GM23248 (cell line): ENCODE measurements at regions of chr2 and their contacts with region 1.

Region 1: GRCh38 chr2:168346725-168347477 is 99.5 kb upstream of the STK39 start:
- DNase-seq: peak; percentile 85
- H3K4me3 ChIP-seq: peak overlapping the region; percentile 75
- H3K27ac ChIP-seq: no peak overlapping the region
- H3K4me1 ChIP-seq: peaks cover 13% of the 10 kb centered on the region
- H3K27me3 ChIP-seq: no peaks in the 10 kb centered on the region

Region 2: DNA sequence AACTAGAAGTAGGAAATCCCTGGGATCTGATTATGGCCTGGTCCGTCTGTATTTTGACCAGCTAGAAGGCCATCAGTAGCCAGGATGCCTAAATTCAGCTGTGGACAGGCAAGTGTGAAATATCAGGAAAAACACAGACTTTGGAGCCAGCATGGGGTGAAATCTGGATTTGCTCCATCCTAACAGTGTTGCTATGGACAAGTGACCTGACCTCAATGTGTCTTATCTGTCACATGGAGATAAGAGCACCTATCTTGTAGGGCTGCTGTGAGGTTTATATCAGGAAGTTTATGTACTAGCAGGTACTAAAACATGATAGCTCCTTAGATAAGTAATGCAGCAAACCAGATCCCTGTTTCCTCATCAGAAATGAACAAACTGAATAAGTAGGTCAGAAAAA is 559.9 kb before region 1 on chr2:
- in situ Hi-C with region 1: no loop called
- DNase-seq: no peak
- H3K4me3 ChIP-seq: no peak overlapping the region
- H3K27ac ChIP-seq: no peak overlapping the region
- H3K4me1 ChIP-seq: no peaks in the 10 kb centered on the region
- H3K27me3 ChIP-seq: no peaks in the 10 kb centered on the region

Region 3: DNA sequence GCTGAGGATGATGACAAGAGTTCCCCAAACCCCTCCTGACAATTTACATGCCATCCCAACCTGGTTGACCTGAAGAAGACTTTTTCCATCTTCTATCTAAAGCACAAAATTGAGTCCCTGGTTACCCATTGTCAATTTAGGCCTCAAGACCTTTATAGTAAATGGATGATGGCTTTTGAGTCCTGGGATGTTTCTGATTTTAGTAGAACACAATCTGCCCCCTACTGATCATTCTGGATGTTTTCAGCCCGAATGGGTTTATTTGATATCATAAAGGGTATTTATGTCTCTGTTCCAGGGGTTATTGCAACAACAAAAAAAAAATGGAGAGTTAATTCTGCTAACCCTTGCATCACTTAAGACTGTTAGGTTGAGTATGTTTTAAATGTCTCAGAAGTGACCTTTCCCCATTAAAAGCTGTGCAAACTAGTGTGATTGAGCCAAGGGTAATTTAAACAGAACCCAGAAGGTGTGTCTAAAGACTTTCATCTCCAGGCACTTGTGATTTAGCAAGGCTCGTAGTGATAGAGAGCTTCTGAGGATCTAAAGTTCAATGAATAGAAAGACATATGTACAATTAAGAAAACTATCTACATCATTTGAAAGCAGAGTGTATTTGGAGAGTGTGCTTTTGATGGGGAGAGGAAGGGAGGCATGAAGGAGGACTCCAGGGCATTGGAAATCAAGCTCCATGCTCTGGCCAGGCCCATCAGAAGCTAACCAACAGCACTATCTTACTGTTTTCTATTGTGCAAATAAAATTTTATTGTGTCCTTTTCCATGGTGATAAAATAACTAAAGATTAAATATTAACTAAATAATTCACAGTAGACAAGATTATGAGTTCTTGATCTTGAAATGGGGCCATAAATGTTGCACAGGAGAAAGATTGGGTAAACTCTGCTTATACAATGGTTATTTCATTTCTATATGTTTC is 358.9 kb after region 1 on chr2:
- in situ Hi-C with region 1: loop called (anchors 10 kb)
- DNase-seq: peak; percentile 60
- H3K4me3 ChIP-seq: no peak overlapping the region
- H3K27ac ChIP-seq: no peak overlapping the region
- H3K4me1 ChIP-seq: no peaks in the 10 kb centered on the region
- H3K27me3 ChIP-seq: no peaks in the 10 kb centered on the region

Region 4: GRCh38 chr2:168758970-168759820 is 412.3 kb after region 1 on chr2:
- in situ Hi-C with region 1: loop called (anchors 5 kb)
- DNase-seq: peak; percentile 77
- H3K4me3 ChIP-seq: no peak overlapping the region
- H3K27ac ChIP-seq: no peak overlapping the region
- H3K4me1 ChIP-seq: no peaks in the 10 kb centered on the region
- H3K27me3 ChIP-seq: no peaks in the 10 kb centered on the region

Region 5: DNA sequence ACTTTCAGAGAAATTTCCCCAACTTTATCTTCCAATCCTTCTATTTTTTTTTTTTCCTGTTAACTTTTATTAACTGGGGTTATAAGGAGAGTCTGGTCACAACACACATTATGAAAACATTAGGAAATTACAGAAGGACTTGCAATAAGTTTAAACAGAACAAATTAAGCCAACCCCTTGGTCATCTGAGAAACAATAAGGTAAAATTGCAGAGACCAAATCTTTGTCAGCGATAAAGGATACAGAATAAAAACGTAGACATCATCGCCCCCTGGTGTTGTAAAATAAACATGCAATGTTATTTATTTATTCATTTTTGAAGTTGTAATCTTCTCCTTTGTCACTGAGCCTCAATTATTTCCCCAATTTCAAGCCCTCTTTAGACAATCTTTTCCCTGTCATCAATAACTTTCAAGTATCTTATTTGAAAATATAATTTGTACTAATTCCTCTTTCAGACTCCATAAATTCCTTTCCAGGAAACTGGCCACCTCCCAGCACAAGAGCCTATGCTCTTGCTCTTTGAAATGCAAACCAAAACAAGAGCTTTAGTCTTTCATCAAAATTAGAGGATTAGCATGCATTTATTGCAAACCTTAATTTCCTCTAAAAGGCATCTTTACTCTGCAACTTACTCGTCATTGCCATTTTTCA is 573.7 kb after region 1 on chr2:
- in situ Hi-C with region 1: loop called (anchors 25 kb)
- DNase-seq: peak; percentile 57
- H3K4me3 ChIP-seq: no peak overlapping the region
- H3K27ac ChIP-seq: no peak overlapping the region
- H3K4me1 ChIP-seq: no peaks in the 10 kb centered on the region
- H3K27me3 ChIP-seq: peaks cover 30% of the 10 kb centered on the region; the same call in 1 of the 2 replicates